ENCODE measurements at regions of chr11 and their contacts with region 1.

Region 1: DNA sequence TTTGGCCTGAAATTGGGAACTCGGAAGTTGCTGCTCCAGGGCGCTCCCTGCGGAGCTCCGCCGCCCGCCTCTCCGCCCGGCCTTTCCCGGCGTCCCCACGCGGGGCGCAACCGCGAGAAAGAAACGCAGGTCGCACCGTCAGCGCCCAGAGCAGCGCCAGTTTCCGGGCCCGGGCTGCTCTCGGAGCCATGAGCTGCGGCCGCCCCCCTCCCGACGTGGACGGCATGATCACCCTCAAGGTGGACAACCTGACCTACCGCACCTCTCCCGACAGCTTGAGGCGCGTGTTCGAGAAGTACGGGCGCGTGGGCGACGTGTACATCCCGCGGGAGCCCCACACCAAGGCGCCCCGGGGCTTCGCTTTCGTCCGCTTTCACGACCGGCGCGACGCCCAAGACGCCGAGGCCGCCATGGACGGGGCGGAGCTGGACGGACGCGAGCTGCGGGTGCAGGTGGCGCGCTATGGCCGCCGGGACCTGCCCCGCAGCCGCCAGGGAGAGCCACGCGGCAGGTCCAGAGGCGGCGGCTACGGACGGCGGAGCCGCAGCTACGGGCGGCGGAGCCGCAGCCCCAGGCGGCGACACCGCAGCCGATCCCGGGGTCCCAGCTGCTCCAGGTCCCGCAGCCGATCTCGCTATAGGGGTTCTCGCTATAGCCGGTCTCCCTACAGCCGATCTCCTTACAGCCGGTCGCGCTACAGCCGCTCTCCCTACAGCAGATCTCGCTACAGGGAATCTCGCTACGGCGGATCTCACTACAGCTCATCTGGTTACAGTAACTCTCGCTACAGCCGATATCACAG is 521 bp downstream of the SRSF8 start:
- DNase-seq: peak; percentile 67
- H3K4me3 Mint-ChIP-seq: peak overlapping the region; percentile 99
- H3K27ac Mint-ChIP-seq: peak overlapping the region; percentile 95
- H3K4me1 Mint-ChIP-seq: peaks cover 15% of the 10 kb centered on the region
- H3K27me3 Mint-ChIP-seq: no peaks in the 10 kb centered on the region
- CTCF ChIP-seq: peak; percentile 50

Region 2: DNA sequence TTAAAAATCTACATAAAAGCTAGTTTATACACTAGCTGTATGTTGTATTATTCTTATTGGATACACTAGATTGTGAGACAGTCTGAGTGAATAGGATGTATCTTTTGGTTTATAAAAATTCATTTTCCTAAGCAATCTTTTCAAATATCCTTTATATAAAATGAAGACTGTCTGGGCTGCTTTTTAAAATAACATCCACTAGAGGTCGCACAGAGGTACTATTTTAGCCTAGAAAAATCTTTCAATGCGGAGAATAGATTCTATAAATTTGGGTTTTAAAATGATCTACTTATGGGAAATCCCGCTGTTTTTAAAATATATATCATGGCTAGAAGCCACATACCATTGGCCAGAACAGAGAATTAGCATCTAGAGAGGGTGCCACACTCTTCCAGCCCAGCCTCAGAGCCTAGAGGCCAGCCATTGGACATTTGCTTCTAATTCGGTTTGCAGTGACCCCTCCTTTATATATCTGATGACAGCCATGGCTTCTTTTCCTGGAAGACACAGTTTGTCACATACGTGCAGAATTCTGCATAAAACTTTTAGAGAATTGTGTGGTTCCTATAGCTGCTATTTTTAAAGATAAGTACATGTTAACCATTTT is 547.7 kb before region 1 on chr11:
- CTCF ChIA-PET with region 1: no interaction called
- POLR2A ChIA-PET with region 1: no interaction called
- intact Hi-C with region 1: loop called (anchors 5 kb)
- DNase-seq: peak; percentile 40
- H3K4me3 Mint-ChIP-seq: no peak overlapping the region
- H3K27ac Mint-ChIP-seq: no peak overlapping the region
- H3K4me1 Mint-ChIP-seq: peaks cover 5% of the 10 kb centered on the region
- H3K27me3 Mint-ChIP-seq: no peaks in the 10 kb centered on the region
- CTCF ChIP-seq: peak; percentile 44

Region 3: GRCh38 chr11:94973099-94973968 is 93.9 kb before region 1 on chr11 and contains the starts of genes CWC15 and KDM4D:
- CTCF ChIA-PET with region 1: interaction called, 13 read pairs
- POLR2A ChIA-PET with region 1: interaction called, 146 read pairs
- intact Hi-C with region 1: loop called (anchors 2 kb)
- DNase-seq: peak; percentile 94
- H3K4me3 Mint-ChIP-seq: peak within 1 kb of the TSS; percentile 86
- H3K27ac Mint-ChIP-seq: peak within 1 kb of the TSS; percentile 96
- H3K4me1 Mint-ChIP-seq: peaks cover 24% of the 10 kb centered on the region
- H3K27me3 Mint-ChIP-seq: no peaks in the 10 kb centered on the region
- CTCF ChIP-seq: no peak
- total RNA-seq, gene CWC15: 59.6 and 61.9 TPM in 2 replicates
- total RNA-seq, gene KDM4D: 1.1 and 1.3 TPM in 2 replicates

Region 4: DNA sequence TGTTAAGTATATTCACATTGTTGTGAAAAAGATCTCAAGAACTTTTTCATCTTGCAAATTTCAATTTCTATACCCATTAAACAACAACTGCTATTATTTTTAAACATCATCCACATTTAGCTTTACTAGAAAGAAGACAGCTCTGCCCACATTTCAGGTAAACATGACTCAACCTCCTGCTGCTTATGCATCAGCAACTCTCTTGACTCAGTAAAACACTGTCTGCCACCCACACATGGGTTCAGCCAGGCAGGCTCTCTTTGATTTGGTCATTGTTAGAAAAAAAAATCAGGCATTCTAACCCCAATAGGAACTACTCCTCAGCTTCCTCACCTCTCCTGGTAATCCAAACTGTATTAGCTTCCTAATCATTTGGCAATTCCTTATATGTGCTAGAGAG is 17.3 kb after region 1 on chr11:
- CTCF ChIA-PET with region 1: interaction called, 50 read pairs
- POLR2A ChIA-PET with region 1: interaction called, 108 read pairs
- intact Hi-C with region 1: loop called (anchors 1 kb)
- DNase-seq: peak; percentile 79
- H3K4me3 Mint-ChIP-seq: no peak overlapping the region
- H3K27ac Mint-ChIP-seq: no peak overlapping the region
- H3K4me1 Mint-ChIP-seq: peaks cover 15% of the 10 kb centered on the region
- H3K27me3 Mint-ChIP-seq: no peaks in the 10 kb centered on the region
- CTCF ChIP-seq: no peak

Region 5: DNA sequence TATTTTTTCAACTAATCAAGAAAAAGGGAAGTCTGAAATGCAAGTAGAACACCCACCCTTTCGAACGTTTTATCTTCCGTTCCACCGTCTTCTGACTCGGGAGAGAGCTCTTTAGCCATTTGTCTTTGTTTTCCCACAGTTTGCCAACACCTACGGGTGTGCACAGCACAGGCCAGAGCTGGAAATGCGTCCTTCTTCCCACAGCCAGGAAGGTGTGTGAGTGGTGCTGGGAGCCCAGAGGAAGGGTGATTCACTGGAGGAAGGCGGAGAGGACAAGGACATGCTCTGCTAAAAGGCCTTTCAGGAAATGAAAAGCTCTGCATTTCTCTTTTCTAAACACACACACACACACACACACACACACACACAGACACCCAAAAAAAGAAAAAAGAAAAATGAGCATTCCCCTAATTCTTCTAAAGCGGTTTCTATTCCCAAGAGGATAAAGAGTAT is 40.9 kb after region 1 on chr11:
- CTCF ChIA-PET with region 1: interaction called, 49 read pairs
- POLR2A ChIA-PET with region 1: interaction called, 242 read pairs
- intact Hi-C with region 1: no loop called
- DNase-seq: peak; percentile 94
- H3K4me3 Mint-ChIP-seq: peak overlapping the region; percentile 75
- H3K27ac Mint-ChIP-seq: peak overlapping the region; percentile 98
- H3K4me1 Mint-ChIP-seq: peaks cover 38% of the 10 kb centered on the region
- H3K27me3 Mint-ChIP-seq: no peaks in the 10 kb centered on the region
- CTCF ChIP-seq: no peak

Region 6: DNA sequence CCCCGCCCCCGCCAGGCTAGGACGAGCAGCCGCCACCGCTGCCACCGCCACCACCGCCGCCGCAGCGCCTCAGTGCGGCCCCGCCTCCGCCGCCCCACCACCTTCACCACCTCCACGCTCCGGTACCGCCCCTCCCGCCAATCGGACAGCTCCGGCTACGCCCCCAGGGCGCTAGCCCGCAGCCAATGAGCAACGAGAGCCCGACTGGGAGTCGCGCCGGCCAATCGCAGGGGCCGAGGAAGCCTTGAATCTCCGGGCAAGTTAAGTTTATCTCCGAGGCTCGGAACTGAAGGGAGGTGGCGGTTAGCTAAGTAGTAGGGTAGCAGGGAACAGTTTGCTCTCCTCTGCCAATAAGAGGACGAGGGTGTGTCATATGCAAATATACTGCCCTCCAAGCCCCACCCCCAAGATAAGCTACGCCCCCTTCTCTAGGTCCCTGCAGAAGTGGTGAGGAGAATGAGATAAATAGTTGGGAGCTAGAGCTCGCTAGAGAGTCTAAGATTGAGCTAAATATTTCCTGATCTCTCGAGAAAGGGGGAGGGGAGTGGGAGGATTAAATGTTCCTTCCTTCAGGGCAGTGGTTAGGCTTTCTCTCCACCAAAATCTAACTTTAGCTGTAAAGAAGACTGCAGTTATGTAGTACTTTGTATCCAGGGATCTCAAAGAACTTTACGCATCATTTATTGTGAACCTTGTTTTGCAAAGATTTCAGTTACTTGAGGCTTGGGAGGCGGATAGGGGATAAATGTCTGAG is 164.1 kb after region 1 on chr11 and contains the start of gene SESN3:
- CTCF ChIA-PET with region 1: interaction called, 14 read pairs
- POLR2A ChIA-PET with region 1: interaction called, 13 read pairs
- intact Hi-C with region 1: loop called (anchors 5 kb)
- DNase-seq: peak; percentile 97
- H3K4me3 Mint-ChIP-seq: no peak within 1 kb of the TSS
- H3K27ac Mint-ChIP-seq: peak within 1 kb of the TSS; percentile 23
- H3K4me1 Mint-ChIP-seq: peaks cover 19% of the 10 kb centered on the region
- H3K27me3 Mint-ChIP-seq: no peaks in the 10 kb centered on the region
- CTCF ChIP-seq: no peak
- total RNA-seq, gene SESN3: 3.0 and 6.3 TPM in 2 replicates

Region 7: DNA sequence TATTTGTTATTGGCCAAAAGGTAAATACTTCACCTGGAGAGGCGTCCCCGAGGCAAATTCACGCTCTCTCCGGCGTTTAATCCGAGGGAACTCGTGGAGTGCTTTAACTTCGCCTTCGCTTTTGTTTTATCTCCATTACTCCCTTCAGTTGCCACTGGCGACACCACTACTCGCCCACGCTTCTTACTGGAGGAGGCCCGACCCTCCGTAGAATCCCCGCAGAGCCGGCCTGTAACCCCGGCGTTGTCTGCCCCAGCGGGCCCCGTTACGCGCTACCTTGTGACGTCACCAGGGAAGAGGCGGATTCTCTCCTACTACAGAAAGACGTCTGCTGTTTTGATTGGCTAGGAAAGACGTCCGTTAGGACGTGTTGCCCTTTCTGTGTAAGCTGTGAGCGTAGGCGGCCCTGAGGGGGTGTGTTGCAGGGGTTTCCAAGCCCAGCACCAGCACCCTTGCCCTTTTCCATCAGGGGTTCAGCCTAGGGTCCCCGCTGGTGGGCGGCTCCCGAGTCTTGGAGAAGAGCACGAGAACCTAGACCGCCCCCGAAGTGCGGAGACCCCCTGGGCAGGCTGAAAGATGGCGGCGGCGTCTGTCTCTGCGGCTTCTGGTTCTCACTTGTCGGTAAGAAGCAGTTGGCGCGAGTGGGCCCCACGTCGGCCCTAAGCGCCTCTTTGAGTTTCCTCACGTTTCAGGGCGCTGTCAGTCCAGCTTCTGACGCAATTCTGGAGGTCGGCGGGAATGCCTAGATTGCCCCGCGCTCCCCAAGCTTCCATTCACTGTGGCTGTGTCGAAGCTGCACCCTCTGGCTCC is 723.1 kb after region 1 on chr11 and contains the start of gene CEP57:
- CTCF ChIA-PET with region 1: interaction called, 8 read pairs
- POLR2A ChIA-PET with region 1: interaction called, 41 read pairs
- intact Hi-C with region 1: no loop called
- DNase-seq: peak; percentile 99
- H3K4me3 Mint-ChIP-seq: peak within 1 kb of the TSS; percentile 97
- H3K27ac Mint-ChIP-seq: peak within 1 kb of the TSS; percentile 100
- H3K4me1 Mint-ChIP-seq: peaks cover 17% of the 10 kb centered on the region
- H3K27me3 Mint-ChIP-seq: no peaks in the 10 kb centered on the region
- CTCF ChIP-seq: no peak
- total RNA-seq, gene CEP57: 73.7 and 78.8 TPM in 2 replicates

Region 8: GRCh38 chr11:95937358-95937757 is 870.1 kb after region 1 on chr11:
- CTCF ChIA-PET with region 1: no interaction called
- POLR2A ChIA-PET with region 1: no interaction called
- intact Hi-C with region 1: no loop called
- DNase-seq: no peak
- H3K4me3 Mint-ChIP-seq: no peak overlapping the region
- H3K27ac Mint-ChIP-seq: no peak overlapping the region
- H3K4me1 Mint-ChIP-seq: no peaks in the 10 kb centered on the region
- H3K27me3 Mint-ChIP-seq: no peaks in the 10 kb centered on the region
- CTCF ChIP-seq: no peak